Activated CD8-positive, alpha-beta memory T cell treated with anti-CD3 and anti-CD28 coated beads, Interleukin-2, amount 10 ng/mL, durations not matched to agents 7 days and 5 days (primary cell): ENCODE measurements at regions of chr16 and their contacts with region 1.

Region 1: GRCh38 chr16:28317040-28317880 is 24.9 kb downstream of the SBK1 start:
- DNase-seq: peak; percentile 79
- ATAC-seq: peak; percentile 80
- H3K4me3 Mint-ChIP-seq: no peak overlapping the region
- H3K27ac Mint-ChIP-seq: no peak overlapping the region
- H3K4me1 Mint-ChIP-seq: peaks cover 10% of the 10 kb centered on the region
- H3K27me3 Mint-ChIP-seq: no peaks in the 10 kb centered on the region

Region 2: GRCh38 chr16:27960619-27961295 is 356.5 kb before region 1 on chr16:
- CTCF ChIA-PET with region 1: no interaction called
- DNase-seq: no peak
- ATAC-seq: no peak
- H3K4me3 Mint-ChIP-seq: no peak overlapping the region
- H3K27ac Mint-ChIP-seq: no peak overlapping the region
- H3K4me1 Mint-ChIP-seq: no peaks in the 10 kb centered on the region
- H3K27me3 Mint-ChIP-seq: peaks cover 7% of the 10 kb centered on the region

Region 3: DNA sequence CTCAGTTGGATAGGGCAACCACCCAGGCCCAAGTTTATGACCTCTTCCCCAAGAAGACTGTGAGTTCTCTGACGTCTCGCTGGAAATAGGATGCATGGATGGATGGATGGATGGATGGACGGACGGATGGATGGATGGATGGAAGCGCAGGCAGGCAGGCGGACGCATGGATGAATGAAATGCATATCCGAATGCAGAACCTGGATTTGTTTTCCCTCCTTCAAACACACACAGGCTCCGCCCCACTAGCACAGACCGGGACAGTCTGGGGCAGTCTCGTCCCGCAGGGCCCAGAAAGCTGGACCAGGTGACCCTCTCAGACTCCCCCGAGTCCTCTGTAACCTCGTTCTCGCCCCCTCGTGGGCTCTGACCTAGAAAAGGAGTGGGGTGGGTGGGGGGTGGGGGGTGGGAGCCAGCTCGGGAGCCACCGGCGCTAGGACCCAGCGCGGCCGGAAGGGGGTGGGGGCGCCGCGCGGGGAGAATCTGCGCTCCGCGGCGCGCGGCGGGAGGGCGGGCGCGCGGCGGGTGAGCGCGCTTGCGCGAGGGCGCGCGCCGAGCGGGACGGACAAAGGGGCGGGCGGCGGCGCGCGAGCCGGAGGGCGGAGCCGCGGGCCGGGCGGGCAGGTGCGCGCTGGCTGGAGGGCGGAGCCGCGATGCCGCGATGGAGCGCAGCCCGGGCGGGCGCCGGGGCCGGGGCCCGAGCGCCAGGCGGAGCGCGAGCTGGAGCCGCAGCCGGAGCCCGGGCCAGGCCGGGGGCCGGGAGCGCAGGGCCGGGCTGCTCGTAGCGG is 25.2 kb before region 1 on chr16 and contains the start of gene SBK1:
- CTCF ChIA-PET with region 1: interaction called, 347 read pairs
- DNase-seq: peak; percentile 85
- ATAC-seq: peak; percentile 97
- H3K4me3 Mint-ChIP-seq: peak within 1 kb of the TSS; percentile 84
- H3K27ac Mint-ChIP-seq: peak within 1 kb of the TSS; percentile 84
- H3K4me1 Mint-ChIP-seq: peaks cover 54% of the 10 kb centered on the region
- H3K27me3 Mint-ChIP-seq: peaks cover 14% of the 10 kb centered on the region
- total RNA-seq, gene SBK1: 3.2 to 11.3 TPM

Region 4: GRCh38 chr16:28297784-28298510 is 19.3 kb before region 1 on chr16:
- CTCF ChIA-PET with region 1: interaction called, 16 read pairs
- DNase-seq: peak; percentile 51
- ATAC-seq: peak; percentile 34
- H3K4me3 Mint-ChIP-seq: no peak overlapping the region
- H3K27ac Mint-ChIP-seq: peak overlapping the region; percentile 76
- H3K4me1 Mint-ChIP-seq: peaks cover 39% of the 10 kb centered on the region
- H3K27me3 Mint-ChIP-seq: peaks cover 11% of the 10 kb centered on the region